Panc1 (cell line): ENCODE measurements at regions of chr11 and their contacts with region 1.

Region 1: GRCh38 chr11:93921695-93922468 is 71.5 kb upstream of the VSTM5 start:
- DNase-seq: peak; percentile 22
- ATAC-seq: peak; percentile 84
- H3K4me3 ChIP-seq: no peak overlapping the region
- H3K27ac ChIP-seq: no peak overlapping the region
- H3K4me1 ChIP-seq: no peaks in the 10 kb centered on the region
- H3K27me3 ChIP-seq: peaks cover 2% of the 10 kb centered on the region; the same call in 1 of the 2 replicates
- CTCF ChIP-seq: peak; percentile 87

Region 2: GRCh38 chr11:93773045-93773477 is 148.8 kb before region 1 on chr11:
- CTCF ChIA-PET with region 1: no interaction called
- POLR2A ChIA-PET with region 1: interaction called, 14 read pairs
- in situ Hi-C with region 1: no loop called
- intact Hi-C with region 1: no loop called
- DNase-seq: no peak
- ATAC-seq: no peak
- H3K4me3 ChIP-seq: no peak overlapping the region
- H3K27ac ChIP-seq: no peak overlapping the region
- H3K4me1 ChIP-seq: no peaks in the 10 kb centered on the region
- H3K27me3 ChIP-seq: no peaks in the 10 kb centered on the region
- CTCF ChIP-seq: no peak

Region 3: GRCh38 chr11:93939084-93939760 is 17.3 kb after region 1 on chr11:
- CTCF ChIA-PET with region 1: no interaction called
- POLR2A ChIA-PET with region 1: no interaction called
- in situ Hi-C with region 1: no loop called
- intact Hi-C with region 1: no loop called
- DNase-seq: no peak
- ATAC-seq: no peak
- H3K4me3 ChIP-seq: no peak overlapping the region
- H3K27ac ChIP-seq: no peak overlapping the region
- H3K4me1 ChIP-seq: no peaks in the 10 kb centered on the region
- H3K27me3 ChIP-seq: peaks cover 7% of the 10 kb centered on the region
- CTCF ChIP-seq: no peak

Region 4: DNA sequence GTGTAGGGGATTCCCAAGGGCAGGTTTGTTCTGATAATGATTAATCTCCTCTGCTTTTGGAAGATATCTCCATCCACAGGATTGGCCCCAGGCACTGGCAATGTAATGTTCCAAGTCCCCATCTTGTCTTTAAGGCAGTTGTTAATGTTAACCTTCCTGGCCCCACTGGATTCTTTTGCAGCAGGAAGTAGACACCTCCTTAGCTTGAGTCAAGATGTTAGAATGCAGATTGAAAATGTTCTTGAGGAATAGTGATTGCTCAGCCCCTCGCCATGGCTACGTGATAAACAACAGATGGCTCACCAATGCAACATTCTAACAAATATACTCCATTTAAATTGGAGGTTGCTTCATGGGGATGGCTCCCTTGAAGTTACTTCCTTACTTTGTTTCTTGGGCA is 106.6 kb after region 1 on chr11:
- CTCF ChIA-PET with region 1: no interaction called
- POLR2A ChIA-PET with region 1: no interaction called
- in situ Hi-C with region 1: no loop called
- intact Hi-C with region 1: no loop called
- DNase-seq: no peak
- ATAC-seq: no peak
- H3K4me3 ChIP-seq: no peak overlapping the region
- H3K27ac ChIP-seq: no peak overlapping the region
- H3K4me1 ChIP-seq: no peaks in the 10 kb centered on the region
- H3K27me3 ChIP-seq: no peaks in the 10 kb centered on the region
- CTCF ChIP-seq: no peak

Region 5: GRCh38 chr11:94107363-94107762 is 185.5 kb after region 1 on chr11:
- CTCF ChIA-PET with region 1: no interaction called
- POLR2A ChIA-PET with region 1: no interaction called
- in situ Hi-C with region 1: no loop called
- intact Hi-C with region 1: loop called (anchors 10 kb)
- DNase-seq: no peak
- ATAC-seq: no peak
- H3K4me3 ChIP-seq: no peak overlapping the region
- H3K27ac ChIP-seq: no peak overlapping the region
- H3K4me1 ChIP-seq: no peaks in the 10 kb centered on the region
- H3K27me3 ChIP-seq: peaks cover 21% of the 10 kb centered on the region
- CTCF ChIP-seq: peak; percentile 27; the same call in 1 of the 2 replicates